A673 (cell line): ENCODE measurements at regions of chr19 and their contacts with region 1.

Region 1: DNA sequence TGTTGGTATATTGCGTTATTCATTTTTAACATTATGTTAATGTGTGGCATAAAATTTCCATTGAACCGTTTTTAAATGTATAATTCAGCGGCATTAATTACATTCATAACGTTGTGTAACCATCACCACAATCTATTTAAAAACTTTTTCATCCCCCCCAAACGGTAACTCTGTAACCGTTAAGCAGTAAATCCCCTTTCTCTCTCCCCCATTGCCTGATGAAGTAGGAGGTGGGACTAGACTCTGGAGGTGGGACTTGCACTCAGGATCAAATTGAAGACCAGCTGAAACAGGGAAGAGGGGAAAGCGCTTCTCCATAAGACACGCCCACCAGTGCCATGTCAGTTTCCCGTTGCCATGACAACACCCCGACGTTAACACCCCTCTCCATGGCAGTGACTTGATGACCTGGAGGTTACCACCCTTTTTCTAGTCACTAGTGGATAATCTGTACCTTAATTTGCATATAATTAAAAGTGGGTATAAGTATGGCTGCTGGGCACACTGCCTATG is 16.8 kb downstream of the CLEC11A start:
- DNase-seq: peak; percentile 93
- H3K4me3 ChIP-seq: peak overlapping the region; percentile 25
- H3K27ac ChIP-seq: peak overlapping the region; percentile 88
- H3K4me1 ChIP-seq: peaks cover 51% of the 10 kb centered on the region
- H3K27me3 ChIP-seq: no peaks in the 10 kb centered on the region
- CTCF ChIP-seq: no peak

Region 2: GRCh38 chr19:49512970-49513745 is 1226.8 kb before region 1 on chr19:
- CTCF ChIA-PET with region 1: no interaction called
- POLR2A ChIA-PET with region 1: no interaction called
- intact Hi-C with region 1: loop called (anchors 10 kb)
- DNase-seq: peak; percentile 86
- H3K4me3 ChIP-seq: peak overlapping the region; percentile 84
- H3K27ac ChIP-seq: peak overlapping the region; percentile 95
- H3K4me1 ChIP-seq: peaks cover 42% of the 10 kb centered on the region
- H3K27me3 ChIP-seq: no peaks in the 10 kb centered on the region
- CTCF ChIP-seq: no peak